A673 (cell line): ENCODE measurements at regions of chr1 and their contacts with region 1.

Region 1: DNA sequence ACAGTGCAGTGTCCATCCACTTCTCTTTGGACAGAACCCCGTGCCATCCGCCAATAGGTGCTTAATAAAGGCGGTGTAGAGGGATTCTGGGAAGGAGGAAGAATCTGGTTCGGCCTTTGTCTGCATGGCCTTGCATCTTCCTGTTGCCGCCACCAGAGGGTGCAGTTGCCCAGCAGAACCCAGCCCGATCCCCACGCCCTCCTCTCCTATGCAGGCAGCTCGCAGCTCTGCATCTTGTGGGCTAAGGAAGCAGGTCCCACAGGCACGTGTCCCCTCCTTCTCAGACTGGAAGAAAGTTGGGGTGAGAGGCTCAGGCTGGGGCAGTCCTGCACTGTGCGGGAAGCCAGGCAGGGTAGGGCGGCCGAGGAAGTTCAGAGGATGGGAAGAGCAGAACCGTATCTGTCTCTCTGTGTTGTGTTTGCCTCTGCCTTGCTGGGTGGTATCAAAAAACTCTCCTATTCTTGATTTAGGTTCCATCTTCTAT is 20.8 kb downstream of the NAV1 start:
- DNase-seq: peak; percentile 91
- H3K4me3 ChIP-seq: no peak overlapping the region
- H3K27ac ChIP-seq: peak overlapping the region; percentile 42
- H3K4me1 ChIP-seq: peaks cover 38% of the 10 kb centered on the region
- H3K27me3 ChIP-seq: no peaks in the 10 kb centered on the region
- CTCF ChIP-seq: peak; percentile 95

Region 2: DNA sequence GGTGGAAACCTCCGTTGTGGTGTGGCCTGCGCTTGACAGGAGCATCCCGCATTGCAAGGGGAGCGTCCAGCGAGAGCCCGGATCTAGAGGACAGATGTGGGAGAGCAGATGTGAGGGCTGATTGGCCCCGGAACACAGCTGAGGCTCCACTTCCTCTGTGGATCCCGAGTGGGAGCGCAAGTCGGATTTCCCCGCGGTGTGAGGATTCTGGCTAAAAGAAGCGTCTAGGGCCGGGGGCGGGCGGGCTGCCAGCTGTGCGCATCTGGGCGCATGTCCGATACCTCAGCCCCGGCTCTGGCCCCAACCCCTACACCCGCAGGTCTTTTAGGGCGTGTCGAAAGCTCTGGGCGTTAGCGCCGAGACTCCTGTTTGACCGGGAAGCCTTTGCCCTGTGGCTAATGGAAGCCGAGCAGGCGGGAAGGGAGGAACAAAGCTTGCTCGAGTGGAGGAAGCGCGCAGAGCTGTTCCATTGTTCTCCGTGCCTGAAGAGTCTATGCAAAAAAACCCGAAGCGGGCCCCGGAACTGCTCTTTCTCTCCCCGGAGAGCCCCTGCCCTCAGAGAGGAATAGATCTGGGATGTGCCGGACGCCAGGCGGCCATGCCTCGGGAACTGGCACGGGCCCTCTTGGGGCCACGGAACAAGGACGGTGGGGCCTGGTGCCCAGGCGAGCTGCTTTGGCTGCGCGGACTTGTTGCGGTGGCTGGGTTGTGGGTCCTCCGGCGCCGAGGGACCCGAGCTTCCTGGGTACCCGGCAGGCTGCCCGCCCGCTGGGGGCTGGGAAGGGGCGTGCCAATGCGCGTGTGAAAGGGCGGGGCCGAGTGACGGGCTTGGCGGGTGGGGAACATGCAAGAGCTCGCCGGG is 90.3 kb after region 1 on chr1:
- CTCF ChIA-PET with region 1: no interaction called
- POLR2A ChIA-PET with region 1: no interaction called
- intact Hi-C with region 1: loop called (anchors 2 kb)
- DNase-seq: peak; percentile 89
- H3K4me3 ChIP-seq: peak overlapping the region; percentile 60
- H3K27ac ChIP-seq: peak overlapping the region; percentile 12
- H3K4me1 ChIP-seq: peaks cover 28% of the 10 kb centered on the region
- H3K27me3 ChIP-seq: no peaks in the 10 kb centered on the region
- CTCF ChIP-seq: no peak

Region 3: DNA sequence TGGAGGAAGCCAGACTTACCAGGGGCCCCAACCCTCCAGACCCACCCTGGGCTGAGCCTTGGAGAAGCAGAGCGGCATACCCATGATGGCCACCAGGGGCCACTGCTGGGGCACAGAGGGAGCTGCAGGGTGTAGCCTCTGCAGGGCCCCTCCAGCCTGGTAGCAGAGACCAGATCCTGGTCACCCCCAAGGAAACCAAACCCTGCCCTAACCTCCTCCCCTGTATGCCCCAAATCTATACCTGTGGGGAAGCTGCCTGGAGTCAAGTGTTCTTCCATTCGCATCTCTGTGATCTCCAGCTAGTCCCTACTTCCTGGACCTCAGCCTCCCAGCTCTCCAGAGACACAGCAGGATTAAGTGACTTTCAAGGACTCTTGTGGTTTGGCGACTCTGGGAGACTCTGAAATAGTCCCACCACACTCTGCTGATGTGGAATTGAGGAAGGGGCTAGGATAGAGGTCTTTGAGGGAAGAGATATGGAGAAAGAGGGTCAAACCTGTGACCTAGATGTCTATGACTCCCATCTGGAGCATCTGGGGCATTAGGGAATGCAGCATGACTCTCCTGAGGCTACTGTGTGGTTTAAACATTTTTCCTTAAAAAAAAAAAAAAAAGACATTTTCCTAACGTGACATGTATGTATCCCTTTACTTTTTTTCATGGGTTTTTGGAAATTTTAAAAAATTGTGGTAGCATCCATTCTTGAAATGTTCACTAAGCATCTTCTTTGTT is 150.0 kb after region 1 on chr1:
- CTCF ChIA-PET with region 1: interaction called, 12 read pairs
- POLR2A ChIA-PET with region 1: no interaction called
- intact Hi-C with region 1: loop called (anchors 1 kb)
- DNase-seq: peak; percentile 74
- H3K4me3 ChIP-seq: no peak overlapping the region
- H3K27ac ChIP-seq: peak overlapping the region; percentile 13
- H3K4me1 ChIP-seq: peaks cover 67% of the 10 kb centered on the region
- H3K27me3 ChIP-seq: no peaks in the 10 kb centered on the region
- CTCF ChIP-seq: peak; percentile 90

Region 4: DNA sequence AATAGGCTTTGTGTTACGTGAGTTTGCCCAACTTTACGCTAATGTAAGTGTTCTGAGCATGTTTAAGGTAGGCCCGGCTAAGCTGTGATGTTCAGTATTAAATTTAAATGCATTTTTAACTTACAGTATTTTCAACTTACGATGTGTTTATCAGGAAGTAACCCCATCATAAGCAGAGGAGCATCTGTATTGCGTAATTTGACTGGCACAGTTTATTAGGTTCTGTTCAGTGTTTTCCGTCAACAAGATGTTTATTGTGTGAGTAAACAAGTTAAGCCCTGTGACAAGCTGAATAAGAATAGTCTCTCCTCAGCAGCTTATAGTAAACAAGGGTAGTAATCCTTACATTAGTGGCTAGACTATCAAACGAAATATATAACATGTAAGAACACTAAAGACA is 301.7 kb after region 1 on chr1:
- CTCF ChIA-PET with region 1: no interaction called
- POLR2A ChIA-PET with region 1: no interaction called
- intact Hi-C with region 1: loop called (anchors 5 kb)
- DNase-seq: no peak
- H3K4me3 ChIP-seq: no peak overlapping the region
- H3K27ac ChIP-seq: no peak overlapping the region
- H3K4me1 ChIP-seq: no peaks in the 10 kb centered on the region
- H3K27me3 ChIP-seq: no peaks in the 10 kb centered on the region
- CTCF ChIP-seq: no peak